Activated CD4-positive, alpha-beta memory T cell treated with anti-CD3 and anti-CD28 coated beads for 36 hours (primary cell): ENCODE measurements at regions of chr22 and their contacts with region 1.

Region 1: GRCh38 chr22:40487663-40488249 is 117.4 kb downstream of the SGSM3 start:
- DNase-seq: no peak
- H3K4me3 Mint-ChIP-seq: no peak overlapping the region
- H3K27ac Mint-ChIP-seq: no peak overlapping the region
- H3K4me1 Mint-ChIP-seq: peaks cover 32% of the 10 kb centered on the region
- H3K27me3 Mint-ChIP-seq: no peaks in the 10 kb centered on the region

Region 2: GRCh38 chr22:40441761-40442385 is 45.9 kb before region 1 on chr22:
- CTCF ChIA-PET with region 1: interaction called, 102 read pairs
- POLR2A ChIA-PET with region 1: no interaction called
- intact Hi-C with region 1: loop called (anchors 1 kb)
- DNase-seq: no peak
- H3K4me3 Mint-ChIP-seq: no peak overlapping the region
- H3K27ac Mint-ChIP-seq: no peak overlapping the region
- H3K4me1 Mint-ChIP-seq: peaks cover 61% of the 10 kb centered on the region
- H3K27me3 Mint-ChIP-seq: no peaks in the 10 kb centered on the region

Region 3: GRCh38 chr22:40463017-40463631 is 24.6 kb before region 1 on chr22:
- CTCF ChIA-PET with region 1: interaction called, 16 read pairs
- POLR2A ChIA-PET with region 1: no interaction called
- intact Hi-C with region 1: loop called (anchors 2 kb)
- DNase-seq: peak; percentile 69
- H3K4me3 Mint-ChIP-seq: peak overlapping the region; percentile 94
- H3K27ac Mint-ChIP-seq: peak overlapping the region; percentile 95
- H3K4me1 Mint-ChIP-seq: peaks cover 66% of the 10 kb centered on the region
- H3K27me3 Mint-ChIP-seq: no peaks in the 10 kb centered on the region

Region 4: DNA sequence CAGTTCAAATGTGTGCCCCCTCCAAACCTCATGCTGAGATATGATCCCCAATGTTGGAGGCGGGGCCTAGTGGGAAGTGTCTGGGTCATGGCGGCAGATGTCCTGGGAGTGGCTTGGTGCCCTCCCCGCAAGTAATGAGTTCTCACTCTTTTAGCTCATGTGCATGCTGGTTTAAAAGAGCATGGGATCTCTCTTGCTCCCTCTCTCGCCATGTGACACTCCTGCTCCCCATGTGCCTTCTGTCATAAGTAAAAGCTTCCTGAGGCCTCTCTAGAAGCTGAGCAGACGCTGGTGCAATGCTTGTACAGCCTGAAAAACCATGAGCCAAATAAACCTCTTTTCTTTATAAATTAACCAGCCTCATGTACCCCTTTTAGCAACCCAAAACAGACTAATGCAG is 18.6 kb before region 1 on chr22:
- CTCF ChIA-PET with region 1: interaction called, 27 read pairs
- POLR2A ChIA-PET with region 1: no interaction called
- intact Hi-C with region 1: no loop called
- DNase-seq: no peak
- H3K4me3 Mint-ChIP-seq: no peak overlapping the region
- H3K27ac Mint-ChIP-seq: no peak overlapping the region
- H3K4me1 Mint-ChIP-seq: peaks cover 33% of the 10 kb centered on the region
- H3K27me3 Mint-ChIP-seq: no peaks in the 10 kb centered on the region

Region 5: GRCh38 chr22:40583053-40583741 is 95.4 kb after region 1 on chr22:
- CTCF ChIA-PET with region 1: no interaction called
- POLR2A ChIA-PET with region 1: no interaction called
- intact Hi-C with region 1: no loop called
- DNase-seq: peak; percentile 25
- H3K4me3 Mint-ChIP-seq: no peak overlapping the region
- H3K27ac Mint-ChIP-seq: peak overlapping the region; percentile 36
- H3K4me1 Mint-ChIP-seq: peaks cover 31% of the 10 kb centered on the region
- H3K27me3 Mint-ChIP-seq: no peaks in the 10 kb centered on the region

Region 6: DNA sequence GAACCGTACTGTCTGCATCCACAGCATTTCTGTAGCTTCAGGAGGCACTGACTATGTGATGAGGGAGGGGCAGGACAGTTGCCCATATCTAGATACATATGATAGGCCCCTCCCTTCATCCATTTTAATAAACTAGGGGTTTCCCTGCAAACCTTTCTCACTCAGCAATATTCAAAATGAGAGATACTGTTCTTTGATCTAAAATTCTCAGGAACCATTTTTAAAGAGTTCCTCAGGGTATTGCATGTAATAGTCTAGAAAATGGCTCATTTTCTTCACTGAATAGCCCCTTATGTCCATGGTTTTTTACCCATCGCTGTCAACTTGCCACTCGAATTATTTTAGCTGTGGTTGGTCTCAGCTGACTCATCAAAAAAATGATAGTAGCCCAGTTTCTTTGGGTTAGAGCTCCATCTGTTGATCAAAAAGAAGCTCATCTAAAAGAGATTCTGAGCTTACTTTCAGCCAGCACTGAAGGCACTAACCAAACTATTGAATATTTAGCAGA is 411.1 kb after region 1 on chr22:
- CTCF ChIA-PET with region 1: interaction called, 10 read pairs
- POLR2A ChIA-PET with region 1: no interaction called
- intact Hi-C with region 1: no loop called
- DNase-seq: peak; percentile 41
- H3K4me3 Mint-ChIP-seq: peak overlapping the region; percentile 20
- H3K27ac Mint-ChIP-seq: peak overlapping the region; percentile 88
- H3K4me1 Mint-ChIP-seq: peaks cover 14% of the 10 kb centered on the region
- H3K27me3 Mint-ChIP-seq: no peaks in the 10 kb centered on the region